Naive thymus-derived CD4-positive, alpha-beta T cell (primary cell): ENCODE measurements at regions of chr14 and their contacts with region 1.

Region 1: DNA sequence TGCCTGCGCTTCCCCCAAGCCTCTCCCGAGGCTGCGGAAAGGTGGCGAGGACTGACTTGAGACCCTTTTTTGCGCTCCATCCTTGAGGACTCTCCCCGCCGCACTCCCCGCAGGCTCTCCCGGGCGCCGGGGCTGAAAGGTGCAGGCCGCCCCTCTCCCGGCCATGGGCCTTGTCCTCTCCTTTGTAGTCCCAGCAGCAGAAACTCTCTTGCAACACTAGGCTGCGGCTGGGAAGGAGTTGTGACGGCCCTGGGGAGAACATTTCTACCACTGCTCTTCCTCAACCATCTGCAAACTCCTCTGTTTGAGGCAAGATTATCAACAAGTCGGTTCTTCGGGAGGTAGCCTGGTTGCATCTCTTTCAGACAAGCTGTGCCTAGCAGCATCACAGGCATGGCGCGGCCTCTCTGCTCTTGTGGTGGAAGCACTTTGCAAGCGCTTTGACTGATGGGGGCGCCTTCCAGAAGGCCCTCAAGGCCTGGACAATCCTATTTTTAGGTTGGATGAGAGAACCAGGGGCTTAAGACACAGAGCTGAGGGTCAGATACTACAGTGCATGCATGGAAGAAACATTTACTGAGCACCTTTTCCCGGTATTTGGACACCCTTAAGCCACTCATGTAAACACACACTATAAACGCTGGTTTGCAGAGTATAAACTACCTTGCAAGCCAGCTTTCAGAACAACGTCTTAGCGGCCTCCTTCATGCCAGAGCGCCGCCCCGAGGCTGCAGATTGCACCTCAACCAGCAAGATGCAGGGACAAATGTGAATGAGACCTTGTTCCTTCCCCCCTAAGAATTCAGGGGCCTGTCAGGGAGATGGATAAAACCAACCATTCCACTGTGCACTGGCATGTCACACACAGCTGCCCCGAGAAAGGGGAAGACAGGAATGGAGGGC is 1.2 kb upstream of the PRIMA1 start:
- DNase-seq: no peak
- ATAC-seq: no peak
- H3K4me3 ChIP-seq: no peak overlapping the region
- H3K4me3 Mint-ChIP-seq: peak overlapping the region in 1 of 10 donors; percentile 57
- H3K27ac ChIP-seq: no peak overlapping the region
- H3K27ac Mint-ChIP-seq: no peak overlapping the region
- H3K4me1 ChIP-seq: no peaks in the 10 kb centered on the region
- H3K4me1 Mint-ChIP-seq: peaks cover 0 to 10% (median 4%) of the 10 kb centered on the region in 7 donors
- H3K27me3 ChIP-seq: no peaks in the 10 kb centered on the region
- H3K27me3 Mint-ChIP-seq: peaks cover 46 to 73% (median 66%) of the 10 kb centered on the region in 5 donors

Region 2: DNA sequence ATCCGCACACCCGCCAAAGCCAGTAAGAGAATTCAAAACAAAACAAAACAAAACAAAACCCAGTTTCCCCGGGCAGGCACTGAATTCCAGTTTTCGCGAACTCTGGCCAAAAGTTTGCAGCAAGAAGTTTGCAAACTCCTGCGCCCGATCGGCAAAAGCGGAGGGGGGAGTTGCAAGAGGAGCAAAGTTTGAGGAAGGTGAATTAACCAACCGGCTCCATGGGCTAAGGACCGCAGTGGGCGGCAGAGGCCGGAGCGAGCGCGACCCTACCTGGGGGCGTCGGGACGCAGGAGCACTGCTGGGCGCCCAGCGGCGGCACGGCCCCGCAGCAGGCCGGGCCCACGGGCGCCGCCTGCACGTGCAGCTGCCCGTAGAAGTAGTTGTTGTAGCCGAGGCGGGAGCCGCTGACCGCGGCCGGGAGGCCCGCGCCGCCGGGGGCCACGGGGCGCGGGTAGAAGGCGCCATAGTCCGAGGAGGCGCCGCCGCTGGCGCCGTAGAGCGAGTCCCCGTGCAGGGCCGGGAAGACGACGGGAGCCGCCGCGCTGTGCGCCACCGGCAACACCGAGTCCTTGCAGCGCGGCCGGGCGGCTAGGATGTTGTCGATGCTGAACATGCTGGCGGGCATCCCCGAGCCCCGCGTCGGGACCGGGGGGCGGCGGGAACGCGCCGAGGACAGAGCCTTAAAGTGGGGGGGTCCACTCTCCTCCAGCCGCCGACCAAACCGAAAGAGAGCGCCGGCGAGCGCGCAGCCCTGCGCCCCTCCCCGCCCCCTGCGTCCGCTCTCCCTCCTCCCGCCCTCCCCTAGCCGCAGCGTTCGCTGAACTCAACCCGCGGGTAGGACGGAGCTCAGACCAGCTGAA is 980.1 kb after region 1 on chr14 and contains the start of gene GSC:
- CTCF ChIA-PET with region 1: no interaction called
- POLR2A ChIA-PET with region 1: no interaction called
- intact Hi-C with region 1: loop called in 1 of 2 experiments (anchors 10 kb)
- DNase-seq: peak in 1 of 9 donors; percentile 38
- ATAC-seq: peak; percentile 22
- H3K4me3 ChIP-seq: no peak within 1 kb of the TSS
- H3K4me3 Mint-ChIP-seq: peak within 1 kb of the TSS; percentile 17 to 86 (median 72)
- H3K27ac ChIP-seq: no peak within 1 kb of the TSS
- H3K27ac Mint-ChIP-seq: peak within 1 kb of the TSS in 1 of 9 donors; percentile 76
- H3K4me1 ChIP-seq: no peaks in the 10 kb centered on the region
- H3K4me1 Mint-ChIP-seq: peaks cover 12 to 27% (median 23%) of the 10 kb centered on the region in 7 donors
- H3K27me3 ChIP-seq: peaks cover 7 to 21% of the 10 kb centered on the region in 2 donors
- H3K27me3 Mint-ChIP-seq: peaks cover 72 to 90% (median 81%) of the 10 kb centered on the region in 5 donors
- total RNA-seq, gene GSC: not detected